PC-3 (cell line): ENCODE measurements at regions of chr20 and their contacts with region 1.

Region 1: GRCh38 chr20:11807066-11808048 is 110.3 kb upstream of the BTBD3 start:
- DNase-seq: peak; percentile 92
- ATAC-seq: peak; percentile 95
- H3K4me3 ChIP-seq: peak overlapping the region; percentile 8; the same call in 1 of the 2 replicates
- H3K27ac ChIP-seq: peak overlapping the region; percentile 33
- H3K4me1 ChIP-seq: peaks cover 40% of the 10 kb centered on the region
- H3K27me3 ChIP-seq: no peaks in the 10 kb centered on the region
- CTCF ChIP-seq: no peak

Region 2: GRCh38 chr20:11755071-11755841 is 52.1 kb before region 1 on chr20:
- CTCF ChIA-PET with region 1: no interaction called
- POLR2A ChIA-PET with region 1: no interaction called
- intact Hi-C with region 1: no loop called
- DNase-seq: peak; percentile 60
- ATAC-seq: peak; percentile 70
- H3K4me3 ChIP-seq: no peak overlapping the region
- H3K27ac ChIP-seq: peak overlapping the region; percentile 15; the same call in 1 of the 2 replicates
- H3K4me1 ChIP-seq: peaks cover 22% of the 10 kb centered on the region
- H3K27me3 ChIP-seq: no peaks in the 10 kb centered on the region
- CTCF ChIP-seq: peak; percentile 56

Region 3: DNA sequence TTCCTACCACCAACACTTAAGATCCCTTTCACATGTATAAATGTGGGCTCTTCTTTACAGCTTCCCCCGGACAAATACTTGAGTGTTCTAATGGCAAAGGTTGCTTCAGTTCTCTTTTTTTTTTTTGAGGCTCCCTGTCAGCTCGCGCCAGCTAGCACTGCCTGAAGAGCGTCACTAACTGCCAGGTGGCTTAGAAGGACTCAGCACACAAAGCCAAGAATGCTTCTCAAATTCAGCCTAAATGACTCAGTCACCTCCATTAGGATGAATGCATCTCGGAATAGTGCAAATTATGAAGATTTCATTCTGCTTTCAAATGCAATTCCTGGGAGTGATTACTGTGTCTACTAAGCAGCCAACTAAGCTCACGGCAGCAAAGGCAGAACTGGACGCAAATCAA is 40.4 kb before region 1 on chr20:
- CTCF ChIA-PET with region 1: no interaction called
- POLR2A ChIA-PET with region 1: no interaction called
- intact Hi-C with region 1: no loop called
- DNase-seq: peak; percentile 43
- ATAC-seq: 0 out of 2 replicates have a peak, but pooled peaks have one; percentile 49
- H3K4me3 ChIP-seq: no peak overlapping the region
- H3K27ac ChIP-seq: no peak overlapping the region
- H3K4me1 ChIP-seq: no peaks in the 10 kb centered on the region
- H3K27me3 ChIP-seq: no peaks in the 10 kb centered on the region
- CTCF ChIP-seq: no peak

Region 4: GRCh38 chr20:11838064-11838636 is 30.8 kb after region 1 on chr20:
- CTCF ChIA-PET with region 1: no interaction called
- POLR2A ChIA-PET with region 1: no interaction called
- intact Hi-C with region 1: no loop called
- DNase-seq: no peak
- ATAC-seq: no peak
- H3K4me3 ChIP-seq: no peak overlapping the region
- H3K27ac ChIP-seq: no peak overlapping the region
- H3K4me1 ChIP-seq: no peaks in the 10 kb centered on the region
- H3K27me3 ChIP-seq: no peaks in the 10 kb centered on the region
- CTCF ChIP-seq: 0 out of 2 replicates have a peak, but pooled peaks have one; percentile 22

Region 5: GRCh38 chr20:11890331-11891080 is 83.1 kb after region 1 on chr20:
- CTCF ChIA-PET with region 1: no interaction called
- POLR2A ChIA-PET with region 1: no interaction called
- intact Hi-C with region 1: loop called (anchors 5 kb)
- DNase-seq: peak; percentile 97
- ATAC-seq: peak; percentile 67
- H3K4me3 ChIP-seq: peak overlapping the region; percentile 82
- H3K27ac ChIP-seq: peak overlapping the region; percentile 55
- H3K4me1 ChIP-seq: peaks cover 24% of the 10 kb centered on the region
- H3K27me3 ChIP-seq: no peaks in the 10 kb centered on the region
- CTCF ChIP-seq: no peak

Region 6: DNA sequence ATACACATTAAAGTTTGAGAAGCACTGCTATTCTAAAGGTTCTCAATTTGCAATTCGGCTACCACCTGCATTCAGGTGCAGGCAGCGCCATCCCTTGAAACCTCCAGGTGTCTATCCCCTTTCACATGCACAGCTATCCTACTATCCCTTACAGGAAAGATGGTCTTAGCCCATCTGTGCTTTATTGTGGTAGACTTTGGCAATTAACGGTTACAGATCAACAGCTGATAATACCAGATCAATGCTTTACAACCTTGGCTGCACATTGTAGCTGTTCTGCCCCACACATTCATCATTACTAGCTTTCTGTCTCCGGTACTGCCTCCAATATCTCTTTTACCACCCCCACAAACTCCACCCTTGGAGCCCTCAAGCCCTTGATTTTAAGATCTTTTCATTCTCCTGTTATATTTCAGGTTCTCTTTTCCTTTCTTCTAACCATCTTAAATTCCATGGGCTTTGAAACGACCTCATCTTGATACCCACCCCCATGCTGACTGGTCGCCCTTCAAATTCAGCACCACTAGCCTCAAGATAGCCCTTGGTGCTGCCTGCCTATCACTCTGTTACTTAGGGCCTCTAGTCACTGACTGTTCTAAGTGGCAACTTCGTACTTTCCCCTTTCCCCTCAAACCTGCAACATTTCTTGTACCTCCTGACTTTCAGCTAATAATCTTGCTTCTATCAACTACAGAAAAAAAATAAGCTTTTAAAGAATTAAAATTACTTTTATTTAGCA is 1252.2 kb after region 1 on chr20:
- CTCF ChIA-PET with region 1: no interaction called
- POLR2A ChIA-PET with region 1: interaction called, 10 read pairs
- intact Hi-C with region 1: no loop called
- DNase-seq: no peak
- ATAC-seq: no peak
- H3K4me3 ChIP-seq: no peak overlapping the region
- H3K27ac ChIP-seq: no peak overlapping the region
- H3K4me1 ChIP-seq: peaks cover 12% of the 10 kb centered on the region
- H3K27me3 ChIP-seq: no peaks in the 10 kb centered on the region
- CTCF ChIP-seq: no peak